ENCODE measurements at regions of chr16 and their contacts with region 1.

Region 1: GRCh38 chr16:70653809-70654771 is 7.7 kb downstream of the IL34 start:
- DNase-seq: peak; percentile 77 to 90 (median 85)
- H3K4me3 ChIP-seq: peak overlapping the region in 4 of 7 experiments; percentile 8 to 75 (median 51)
- H3K27ac ChIP-seq: no peak overlapping the region
- H3K4me1 ChIP-seq: peaks cover 0 to 5% (median 3%) of the 10 kb centered on the region in 4 experiments
- H3K27me3 ChIP-seq: no peaks in the 10 kb centered on the region

Region 2: DNA sequence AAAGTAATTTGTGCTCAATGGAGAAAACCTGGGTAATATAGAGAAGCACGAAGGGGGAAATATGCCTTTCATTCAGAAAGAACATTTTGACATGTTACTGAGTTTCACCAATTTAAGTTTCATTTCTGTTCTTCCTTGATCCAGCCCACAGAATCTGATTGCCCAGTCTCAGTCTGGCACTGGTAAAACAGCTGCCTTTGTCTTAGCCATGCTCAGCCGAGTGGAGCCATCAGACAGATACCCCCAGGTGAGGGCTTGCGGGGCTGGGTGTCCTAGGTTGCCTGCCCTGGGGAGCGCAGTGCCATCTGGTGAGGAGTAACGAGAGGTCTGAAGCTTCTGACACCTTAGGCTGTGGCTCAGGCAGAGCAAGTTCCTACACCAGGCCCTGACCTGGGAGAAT is 289.7 kb before region 1 on chr16:
- CTCF ChIA-PET with region 1: interaction called, 13 read pairs
- POLR2A ChIA-PET with region 1: no interaction called
- DNase-seq: no peak
- H3K4me3 ChIP-seq: no peak overlapping the region
- H3K27ac ChIP-seq: no peak overlapping the region
- H3K4me1 ChIP-seq: no peaks in the 10 kb centered on the region
- H3K27me3 ChIP-seq: no peaks in the 10 kb centered on the region